IMR-90 (cell line): ENCODE measurements at regions of chr16 and their contacts with region 1.

Region 1: DNA sequence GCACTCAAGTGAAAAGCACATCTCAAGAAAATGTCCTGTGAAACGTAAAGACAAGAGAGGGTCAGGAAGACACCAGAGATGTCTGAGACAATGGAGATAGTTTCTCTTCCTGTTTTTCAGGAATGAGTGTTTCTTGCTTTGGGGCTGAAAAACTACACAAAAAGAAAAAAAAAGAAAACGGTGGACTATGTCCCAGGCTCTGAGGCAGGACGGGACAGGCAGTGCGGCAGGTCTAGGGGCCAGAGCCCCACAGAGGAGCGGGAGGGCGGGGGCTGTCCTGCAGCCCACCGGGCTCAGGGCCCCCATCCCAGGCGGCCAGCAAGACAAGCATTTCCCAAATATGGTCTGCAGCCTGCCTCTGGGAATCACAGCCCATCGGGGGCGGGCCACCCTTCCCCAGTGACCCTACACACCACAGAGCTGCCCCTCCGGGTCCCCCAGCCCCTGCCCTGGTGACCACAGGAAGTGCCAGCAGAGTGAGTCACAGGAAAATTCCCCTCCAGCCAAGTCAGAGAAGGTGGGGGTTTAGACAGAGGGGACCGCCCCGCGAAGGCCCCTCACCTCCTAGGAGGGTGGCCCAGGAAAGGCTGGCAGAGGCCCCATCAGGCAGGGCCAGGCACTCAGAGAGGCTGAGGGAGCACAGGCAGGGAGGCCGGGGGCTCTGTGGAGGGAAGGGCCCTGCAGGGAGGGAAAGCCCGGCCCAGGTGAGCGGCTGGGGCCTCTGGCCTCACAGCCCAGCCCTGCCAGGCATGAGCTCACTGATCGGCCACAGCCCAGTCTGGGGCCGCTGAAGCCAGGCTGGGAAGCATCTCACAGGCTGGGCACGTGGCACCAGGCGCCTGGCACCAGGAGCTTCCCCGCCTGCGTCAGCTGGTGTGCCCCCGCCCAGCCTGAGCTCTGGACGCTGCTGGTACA is 6.3 kb downstream of the BCAR1 start:
- DNase-seq: peak; percentile 98
- ATAC-seq: peak; percentile 73
- H3K4me3 ChIP-seq: no peak overlapping the region
- H3K27ac ChIP-seq: peak overlapping the region; percentile 93
- H3K4me1 ChIP-seq: peaks cover 57% of the 10 kb centered on the region
- H3K27me3 ChIP-seq: no peaks in the 10 kb centered on the region
- CTCF ChIP-seq: no peak
- POLR2A ChIP-seq: peak; percentile 78
- RAD21 ChIP-seq: no peak; the same call in 1 of the 2 replicates

Region 2: GRCh38 chr16:75265845-75266701 is 21.0 kb after region 1 on chr16:
- CTCF ChIA-PET with region 1: no interaction called
- POLR2A ChIA-PET with region 1: interaction called, 5 read pairs
- dilution Hi-C with region 1: no loop called
- in situ Hi-C with region 1: no loop called
- intact Hi-C with region 1: loop called (anchors 1 kb)
- DNase-seq: peak; percentile 47
- ATAC-seq: peak; percentile 75
- H3K4me3 ChIP-seq: peak overlapping the region; percentile 94
- H3K27ac ChIP-seq: peak overlapping the region; percentile 97
- H3K4me1 ChIP-seq: peaks cover 42% of the 10 kb centered on the region
- H3K27me3 ChIP-seq: no peaks in the 10 kb centered on the region
- CTCF ChIP-seq: 0 out of 2 replicates have a peak, but pooled peaks have one; percentile 1
- POLR2A ChIP-seq: peak; percentile 74
- RAD21 ChIP-seq: no peak